A673 (cell line): ENCODE measurements at regions of chr7 and their contacts with region 1.

Region 1: DNA sequence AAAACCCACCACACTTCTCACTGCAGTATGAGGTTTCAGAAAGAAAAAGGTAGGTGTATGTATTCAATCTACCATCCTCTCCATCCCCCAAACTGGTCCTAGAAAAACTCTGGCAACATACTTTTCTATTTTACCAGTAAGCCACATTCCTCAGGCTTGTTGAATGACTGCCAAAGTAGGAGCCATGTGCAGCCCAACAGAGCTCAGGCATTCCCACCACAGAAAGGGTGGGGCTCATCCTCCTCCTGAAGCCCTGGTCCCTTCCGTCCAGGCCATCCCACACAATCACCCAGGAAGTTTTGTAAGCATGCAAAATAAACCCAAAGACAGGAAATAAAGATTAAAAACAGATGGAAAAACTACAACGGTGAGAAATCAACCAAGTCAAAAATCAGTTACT is 57.2 kb downstream of the MAD1L1 start:
- DNase-seq: peak; percentile 93
- H3K4me3 ChIP-seq: no peak overlapping the region
- H3K27ac ChIP-seq: peak overlapping the region; percentile 70
- H3K4me1 ChIP-seq: peaks cover 42% of the 10 kb centered on the region
- H3K27me3 ChIP-seq: no peaks in the 10 kb centered on the region
- CTCF ChIP-seq: no peak

Region 2: DNA sequence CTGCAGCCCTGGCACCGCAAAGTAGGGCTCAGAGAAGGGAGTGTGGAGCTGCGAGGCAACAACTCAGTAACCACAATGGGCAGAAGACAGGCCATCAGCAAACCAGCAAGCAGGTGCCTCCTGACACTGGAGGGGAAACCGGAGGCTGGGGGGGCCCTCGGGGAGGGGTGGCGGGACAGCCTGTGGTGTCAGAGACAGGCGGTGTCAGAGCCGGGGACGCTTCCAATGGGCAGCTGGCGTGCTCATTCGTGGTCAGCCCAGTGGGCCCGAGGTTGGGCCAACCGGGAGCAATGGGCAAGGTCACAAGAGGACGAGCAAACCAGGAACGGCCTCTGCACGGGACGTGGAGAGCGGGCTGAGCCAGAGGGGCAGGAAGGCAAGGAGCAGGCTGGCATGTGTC is 100.8 kb before region 1 on chr7:
- CTCF ChIA-PET with region 1: interaction called, 14 read pairs
- POLR2A ChIA-PET with region 1: no interaction called
- intact Hi-C with region 1: no loop called
- DNase-seq: no peak
- H3K4me3 ChIP-seq: no peak overlapping the region
- H3K27ac ChIP-seq: no peak overlapping the region
- H3K4me1 ChIP-seq: peaks cover 18% of the 10 kb centered on the region
- H3K27me3 ChIP-seq: no peaks in the 10 kb centered on the region
- CTCF ChIP-seq: no peak

Region 3: GRCh38 chr7:2129323-2130095 is 46.0 kb before region 1 on chr7:
- CTCF ChIA-PET with region 1: no interaction called
- POLR2A ChIA-PET with region 1: interaction called, 25 read pairs
- intact Hi-C with region 1: no loop called
- DNase-seq: no peak
- H3K4me3 ChIP-seq: no peak overlapping the region
- H3K27ac ChIP-seq: no peak overlapping the region
- H3K4me1 ChIP-seq: peaks cover 22% of the 10 kb centered on the region
- H3K27me3 ChIP-seq: no peaks in the 10 kb centered on the region
- CTCF ChIP-seq: no peak

Region 4: DNA sequence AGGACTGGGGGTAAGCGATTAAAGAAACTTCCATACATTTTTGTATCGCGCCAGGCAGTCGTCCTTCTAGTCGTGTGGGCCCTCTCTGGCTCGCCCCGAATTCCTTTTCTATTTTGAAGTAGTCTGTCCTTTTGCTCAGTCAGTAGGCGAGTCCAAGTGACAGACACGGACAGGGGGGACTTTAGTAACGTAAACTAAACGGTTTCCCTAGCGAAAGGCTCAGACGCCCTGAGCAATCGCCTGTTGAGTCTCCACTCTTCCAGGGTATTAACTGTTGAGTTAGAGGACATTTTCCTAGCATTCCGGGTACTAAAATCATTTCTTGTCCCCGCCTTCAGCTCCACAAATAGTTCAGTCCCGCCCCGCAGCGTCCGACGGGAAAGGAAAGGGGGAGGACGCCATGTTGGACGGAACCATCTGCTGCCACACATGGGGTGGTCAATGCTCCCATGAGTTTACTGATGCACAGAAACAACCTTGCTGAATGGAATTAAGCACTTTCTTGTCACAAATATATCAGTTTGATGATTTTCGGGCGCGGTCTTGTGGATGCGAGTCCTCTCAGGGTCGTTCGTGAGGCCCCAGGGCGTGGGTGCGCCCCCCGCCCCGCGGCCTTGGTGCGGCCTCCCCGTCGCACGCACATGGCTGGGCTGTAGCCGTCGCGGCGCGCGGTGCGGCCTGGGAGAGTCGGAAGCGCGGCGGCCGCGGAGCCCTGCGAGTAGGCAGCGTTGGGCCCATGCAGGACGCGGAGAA is 178.8 kb after region 1 on chr7 and contains the start of gene EIF3B:
- CTCF ChIA-PET with region 1: no interaction called
- POLR2A ChIA-PET with region 1: no interaction called
- intact Hi-C with region 1: no loop called
- DNase-seq: peak; percentile 96
- H3K4me3 ChIP-seq: peak within 1 kb of the TSS; percentile 98
- H3K27ac ChIP-seq: peak within 1 kb of the TSS; percentile 100
- H3K4me1 ChIP-seq: peaks cover 38% of the 10 kb centered on the region
- H3K27me3 ChIP-seq: no peaks in the 10 kb centered on the region
- CTCF ChIP-seq: no peak
- total RNA-seq, gene EIF3B: 356 and 364 TPM in 2 replicates

Region 5: GRCh38 chr7:2873686-2874551 is 698.4 kb after region 1 on chr7:
- CTCF ChIA-PET with region 1: no interaction called
- POLR2A ChIA-PET with region 1: no interaction called
- intact Hi-C with region 1: no loop called
- DNase-seq: peak; percentile 73
- H3K4me3 ChIP-seq: no peak overlapping the region
- H3K27ac ChIP-seq: peak overlapping the region; percentile 80
- H3K4me1 ChIP-seq: peaks cover 3% of the 10 kb centered on the region
- H3K27me3 ChIP-seq: no peaks in the 10 kb centered on the region
- CTCF ChIP-seq: no peak